Transverse colon (tissue), 4 donors: ENCODE measurements at regions of chr1 and their contacts with region 1.

Region 1: DNA sequence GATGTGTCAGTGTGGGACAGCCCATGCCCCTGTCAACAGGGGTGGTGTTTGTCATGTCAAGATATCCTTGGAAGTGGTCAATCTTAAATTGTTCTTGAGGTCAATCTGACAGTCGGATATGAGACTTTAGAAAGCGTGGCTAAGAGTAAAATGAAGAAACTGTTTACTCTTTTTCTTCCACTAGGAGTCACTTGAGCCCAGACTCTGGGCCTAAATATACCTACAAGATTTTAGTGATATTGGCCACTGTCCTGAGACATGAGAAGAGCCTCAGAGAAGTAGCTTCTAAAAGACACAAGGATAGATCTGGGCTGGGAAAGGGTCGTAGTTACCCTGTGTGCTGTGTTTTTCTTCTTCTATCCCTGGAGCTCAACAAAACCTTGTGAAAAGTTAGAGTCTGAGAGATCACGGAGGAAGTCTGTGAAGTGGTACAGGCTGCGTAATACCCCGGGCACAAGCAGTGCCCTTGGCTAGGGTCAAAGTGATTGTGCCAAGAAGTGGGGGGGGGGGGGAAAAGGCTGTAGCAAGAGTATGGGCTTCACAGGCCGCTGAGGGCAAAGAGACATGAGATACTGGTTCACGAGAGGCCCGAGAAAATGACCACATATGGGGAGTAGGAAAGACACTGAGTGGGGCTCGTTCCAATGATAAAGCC is 355.2 kb upstream of the GREM2 start:
- DNase-seq: no peak
- H3K4me3 ChIP-seq: no peak overlapping the region
- H3K27ac ChIP-seq: no peak overlapping the region
- H3K4me1 ChIP-seq: no peaks in the 10 kb centered on the region
- H3K27me3 ChIP-seq: no peaks in the 10 kb centered on the region
- CTCF ChIP-seq: peak in 4 of 5 experiments; percentile 28 to 53 (median 41)
- EP300 ChIP-seq: no peak
- POLR2A ChIP-seq: no peak

Region 2: GRCh38 chr1:240906477-240906876 is 60.7 kb before region 1 on chr1:
- in situ Hi-C with region 1: no loop called
- intact Hi-C with region 1: no loop called
- DNase-seq: peak; percentile 44
- H3K4me3 ChIP-seq: no peak overlapping the region
- H3K27ac ChIP-seq: no peak overlapping the region
- H3K4me1 ChIP-seq: no peaks in the 10 kb centered on the region
- H3K27me3 ChIP-seq: no peaks in the 10 kb centered on the region
- CTCF ChIP-seq: no peak
- EP300 ChIP-seq: no peak
- POLR2A ChIP-seq: no peak

Region 3: DNA sequence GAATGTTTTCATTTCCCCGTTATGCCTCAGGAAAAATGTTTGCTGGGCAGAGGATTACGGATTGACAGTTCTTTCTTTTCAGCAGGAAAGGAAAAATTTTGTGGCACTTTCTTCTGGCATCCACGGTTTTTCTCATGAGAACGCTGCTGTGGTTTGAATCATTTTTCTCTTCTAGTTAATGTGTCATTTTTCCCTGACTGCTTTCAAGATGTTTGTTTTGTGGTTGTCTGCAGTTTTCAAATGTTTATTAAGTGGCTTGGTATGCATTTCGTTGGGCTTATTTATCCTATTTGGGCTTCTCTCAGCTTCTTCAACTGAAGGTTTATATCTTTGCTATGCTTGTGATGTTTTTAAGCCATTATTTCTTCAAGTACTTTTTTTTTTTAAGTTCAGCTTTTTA is 30.8 kb after region 1 on chr1:
- in situ Hi-C with region 1: no loop called
- intact Hi-C with region 1: no loop called
- DNase-seq: no peak
- H3K4me3 ChIP-seq: no peak overlapping the region
- H3K27ac ChIP-seq: no peak overlapping the region
- H3K4me1 ChIP-seq: no peaks in the 10 kb centered on the region
- H3K27me3 ChIP-seq: no peaks in the 10 kb centered on the region
- CTCF ChIP-seq: no peak
- EP300 ChIP-seq: no peak
- POLR2A ChIP-seq: no peak

Region 4: GRCh38 chr1:241140670-241141069 is 173.5 kb after region 1 on chr1:
- in situ Hi-C with region 1: no loop called
- intact Hi-C with region 1: no loop called
- DNase-seq: no peak
- H3K4me3 ChIP-seq: no peak overlapping the region
- H3K27ac ChIP-seq: no peak overlapping the region
- H3K4me1 ChIP-seq: no peaks in the 10 kb centered on the region
- H3K27me3 ChIP-seq: no peaks in the 10 kb centered on the region
- CTCF ChIP-seq: no peak
- EP300 ChIP-seq: no peak
- POLR2A ChIP-seq: no peak

Region 5: GRCh38 chr1:241156231-241156965 is 189.2 kb after region 1 on chr1:
- in situ Hi-C with region 1: no loop called
- intact Hi-C with region 1: no loop called
- DNase-seq: peak; percentile 64
- H3K4me3 ChIP-seq: no peak overlapping the region
- H3K27ac ChIP-seq: peak overlapping the region in 3 of 4 donors; percentile 34 to 60 (median 37)
- H3K4me1 ChIP-seq: peaks cover 0 to 7% (median 1%) of the 10 kb centered on the region in 4 donors
- H3K27me3 ChIP-seq: no peaks in the 10 kb centered on the region
- CTCF ChIP-seq: no peak
- EP300 ChIP-seq: no peak
- POLR2A ChIP-seq: no peak

Region 6: DNA sequence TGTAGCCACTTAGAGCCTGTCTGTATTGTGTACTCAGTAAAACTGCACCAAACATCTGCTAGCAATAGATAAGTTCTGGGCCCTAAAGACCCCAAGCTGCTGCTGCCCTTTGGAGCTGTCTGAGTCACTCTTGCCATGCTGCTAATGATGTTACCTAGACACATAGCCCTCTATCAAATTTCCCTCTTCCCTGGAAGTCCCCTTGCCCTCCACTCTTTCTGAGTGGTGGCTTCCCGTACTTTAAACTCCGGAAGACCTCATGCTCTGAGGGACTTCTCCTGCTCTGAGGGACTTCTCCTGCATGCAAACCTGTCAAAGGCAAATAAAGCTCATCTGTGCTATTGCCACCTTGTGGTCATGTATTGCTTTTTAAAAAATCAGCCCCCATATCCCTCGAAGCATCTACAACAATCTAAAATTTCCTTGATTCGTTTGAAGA is 518.4 kb after region 1 on chr1:
- in situ Hi-C with region 1: loop called in 2 of 4 experiments (anchors 25 kb)
- intact Hi-C with region 1: no loop called
- DNase-seq: no peak
- H3K4me3 ChIP-seq: no peak overlapping the region
- H3K27ac ChIP-seq: no peak overlapping the region
- H3K4me1 ChIP-seq: no peaks in the 10 kb centered on the region
- H3K27me3 ChIP-seq: no peaks in the 10 kb centered on the region
- CTCF ChIP-seq: peak in 3 of 5 experiments; percentile 19 to 25 (median 21)
- EP300 ChIP-seq: no peak
- POLR2A ChIP-seq: no peak